ENCODE measurements at regions of chr2 and their contacts with region 1.

Region 1: GRCh38 chr2:55519938-55520885 is 694 bp downstream of the CFAP36 start:
- DNase-seq: peak; percentile 38
- H3K4me3 Mint-ChIP-seq: peak overlapping the region; percentile 97
- H3K27ac Mint-ChIP-seq: peak overlapping the region; percentile 94
- H3K4me1 Mint-ChIP-seq: peaks cover 14% of the 10 kb centered on the region
- H3K27me3 Mint-ChIP-seq: no peaks in the 10 kb centered on the region

Region 2: DNA sequence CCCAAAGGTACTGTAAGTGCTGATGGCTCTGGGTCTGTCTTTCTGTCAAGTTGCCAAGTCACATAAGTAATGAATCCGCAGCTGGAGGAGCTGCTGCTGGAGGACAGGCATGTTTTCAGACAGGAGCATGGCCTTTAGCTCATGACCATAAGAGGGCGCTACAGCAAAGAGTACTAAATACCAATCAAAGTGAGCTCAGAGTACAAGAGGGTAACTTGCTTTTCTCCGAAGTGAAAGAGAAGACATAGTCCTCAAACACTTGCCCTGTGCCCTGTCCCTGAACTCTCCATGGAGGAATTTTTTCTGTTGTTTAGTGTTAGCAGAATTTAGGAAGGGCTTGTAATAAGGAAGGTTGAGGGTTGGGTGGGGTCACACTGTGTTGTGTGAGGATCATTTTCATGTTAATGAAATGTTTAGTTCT is 854.8 kb before region 1 on chr2:
- CTCF ChIA-PET with region 1: no interaction called
- POLR2A ChIA-PET with region 1: no interaction called
- DNase-seq: peak; percentile 47
- H3K4me3 Mint-ChIP-seq: no peak overlapping the region
- H3K27ac Mint-ChIP-seq: no peak overlapping the region
- H3K4me1 Mint-ChIP-seq: peaks cover 18% of the 10 kb centered on the region
- H3K27me3 Mint-ChIP-seq: no peaks in the 10 kb centered on the region

Region 3: GRCh38 chr2:55530539-55531081 is 10.4 kb after region 1 on chr2:
- CTCF ChIA-PET with region 1: interaction called, 21 read pairs
- POLR2A ChIA-PET with region 1: interaction called, 75 read pairs
- DNase-seq: peak; percentile 20
- H3K4me3 Mint-ChIP-seq: peak overlapping the region; percentile 9
- H3K27ac Mint-ChIP-seq: peak overlapping the region; percentile 89
- H3K4me1 Mint-ChIP-seq: peaks cover 21% of the 10 kb centered on the region
- H3K27me3 Mint-ChIP-seq: no peaks in the 10 kb centered on the region

Measured in activated CD4-positive, alpha-beta memory T cell treated with anti-CD3 and anti-CD28 coated beads, Interleukin-2, amount 10 ng/mL, durations not matched to agents 7 days and 5 days (primary cell).